SK-N-SH (cell line): ENCODE measurements at regions of chr10 and their contacts with region 1.

Region 1: DNA sequence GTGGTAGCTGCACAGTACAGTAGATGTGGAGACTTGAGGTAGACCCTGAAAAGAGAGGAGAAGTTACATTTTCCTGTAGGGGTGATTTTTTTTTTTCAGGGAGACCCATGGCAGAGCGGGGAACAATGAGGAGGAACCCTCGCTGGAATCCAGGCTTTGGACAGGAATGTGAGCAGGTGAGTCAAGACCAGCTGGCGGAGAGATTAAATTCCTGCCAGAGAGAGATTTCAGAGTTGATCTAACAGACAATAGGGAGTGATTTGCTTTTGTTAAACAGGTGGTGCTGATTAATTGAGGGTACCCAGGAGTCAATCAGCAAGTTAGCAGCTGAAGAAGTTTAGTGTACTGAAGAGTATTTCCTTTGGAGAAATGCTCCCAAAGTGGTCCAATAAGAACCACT is 41.6 kb upstream of the MINDY3 start:
- DNase-seq: no peak
- H3K4me3 ChIP-seq: no peak overlapping the region
- H3K27ac ChIP-seq: no peak overlapping the region
- H3K4me1 ChIP-seq: no peaks in the 10 kb centered on the region
- H3K27me3 ChIP-seq: no peaks in the 10 kb centered on the region
- CTCF ChIP-seq: no peak
- EP300 ChIP-seq: no peak
- RAD21 ChIP-seq: no peak

Region 2: DNA sequence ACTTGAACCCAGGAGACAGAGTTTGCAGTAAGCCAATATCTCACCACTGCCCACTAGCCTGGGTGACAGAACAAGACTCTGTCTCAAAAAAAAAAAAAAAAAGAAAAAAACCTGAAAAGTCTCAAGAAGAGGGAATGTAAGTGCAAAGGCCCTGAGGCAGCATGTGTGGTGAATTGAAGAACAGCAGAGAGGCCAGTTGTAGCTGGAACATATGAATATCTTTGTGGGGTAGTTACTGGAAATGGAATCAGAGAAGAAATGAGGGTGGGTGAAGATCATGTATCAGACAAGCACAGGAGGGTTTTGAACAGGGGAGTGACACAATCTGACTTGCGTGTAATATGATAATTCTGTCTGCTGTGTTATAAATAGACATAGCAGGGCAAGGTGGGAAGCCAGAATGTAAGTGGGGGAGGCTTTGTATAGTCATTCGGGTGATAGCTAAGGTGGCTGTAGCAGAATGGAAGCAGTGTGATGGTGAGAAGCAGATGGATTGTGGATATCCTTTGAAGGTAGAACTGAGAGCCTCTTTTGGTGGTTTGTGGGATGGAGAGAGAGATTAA is 136.9 kb before region 1 on chr10:
- CTCF ChIA-PET with region 1: no interaction called
- POLR2A ChIA-PET with region 1: no interaction called
- DNase-seq: no peak
- H3K4me3 ChIP-seq: no peak overlapping the region
- H3K27ac ChIP-seq: no peak overlapping the region
- H3K4me1 ChIP-seq: no peaks in the 10 kb centered on the region
- H3K27me3 ChIP-seq: no peaks in the 10 kb centered on the region
- CTCF ChIP-seq: no peak
- EP300 ChIP-seq: no peak
- RAD21 ChIP-seq: no peak

Region 3: DNA sequence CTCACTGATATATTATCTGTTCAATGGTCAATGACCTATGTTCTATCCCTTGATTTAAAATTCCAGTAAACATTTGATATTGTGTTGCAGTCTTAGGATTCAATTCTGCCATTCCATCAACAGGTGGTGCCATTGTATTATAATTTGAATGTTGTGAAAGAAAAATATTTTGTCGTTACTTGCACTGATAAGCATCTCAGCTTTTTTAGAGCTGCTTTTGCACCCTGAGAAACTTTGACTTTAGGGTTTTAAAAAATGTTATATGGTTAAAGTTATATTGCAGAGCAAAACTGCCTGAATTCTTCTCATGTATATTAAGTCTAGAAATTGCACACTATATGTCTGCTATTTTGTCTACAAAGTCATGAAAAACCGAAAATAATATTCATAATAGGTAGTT is 22.8 kb before region 1 on chr10:
- CTCF ChIA-PET with region 1: interaction called, 16 read pairs
- POLR2A ChIA-PET with region 1: no interaction called
- DNase-seq: peak; percentile 44
- H3K4me3 ChIP-seq: no peak overlapping the region
- H3K27ac ChIP-seq: no peak overlapping the region
- H3K4me1 ChIP-seq: no peaks in the 10 kb centered on the region
- H3K27me3 ChIP-seq: peaks cover 14% of the 10 kb centered on the region; the same call in 1 of the 2 replicates
- CTCF ChIP-seq: peak; percentile 87
- EP300 ChIP-seq: no peak
- RAD21 ChIP-seq: peak; percentile 77

Region 4: DNA sequence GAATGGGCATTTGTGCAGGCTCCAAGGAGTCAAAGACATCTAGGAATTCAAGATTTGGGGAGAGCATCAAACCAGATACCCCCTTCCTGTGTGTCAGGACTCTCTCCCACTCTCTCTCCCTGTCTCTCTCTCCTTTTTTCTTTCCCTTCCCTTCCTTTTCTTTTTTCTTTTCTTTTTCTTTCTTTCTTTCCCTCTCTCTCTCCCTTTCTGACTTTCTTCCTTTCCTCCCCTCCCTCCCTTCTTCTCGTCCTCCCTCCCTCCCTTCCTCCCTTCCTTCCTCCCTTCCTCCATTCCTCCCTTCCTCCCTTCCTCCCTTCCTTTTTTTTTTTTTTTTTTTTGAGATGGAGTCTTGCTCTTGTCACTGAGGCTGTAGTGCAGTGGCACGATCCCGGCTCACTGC is 17.4 kb before region 1 on chr10:
- CTCF ChIA-PET with region 1: interaction called, 16 read pairs
- POLR2A ChIA-PET with region 1: no interaction called
- DNase-seq: no peak
- H3K4me3 ChIP-seq: no peak overlapping the region
- H3K27ac ChIP-seq: no peak overlapping the region
- H3K4me1 ChIP-seq: no peaks in the 10 kb centered on the region
- H3K27me3 ChIP-seq: peaks cover 20% of the 10 kb centered on the region; the same call in 1 of the 2 replicates
- CTCF ChIP-seq: no peak
- EP300 ChIP-seq: no peak
- RAD21 ChIP-seq: no peak

Region 5: GRCh38 chr10:16063350-16063749 is 161.5 kb after region 1 on chr10:
- CTCF ChIA-PET with region 1: no interaction called
- POLR2A ChIA-PET with region 1: no interaction called
- DNase-seq: no peak
- H3K4me3 ChIP-seq: no peak overlapping the region
- H3K27ac ChIP-seq: no peak overlapping the region
- H3K4me1 ChIP-seq: no peaks in the 10 kb centered on the region
- H3K27me3 ChIP-seq: no peaks in the 10 kb centered on the region
- CTCF ChIP-seq: no peak
- EP300 ChIP-seq: no peak
- RAD21 ChIP-seq: no peak

Region 6: DNA sequence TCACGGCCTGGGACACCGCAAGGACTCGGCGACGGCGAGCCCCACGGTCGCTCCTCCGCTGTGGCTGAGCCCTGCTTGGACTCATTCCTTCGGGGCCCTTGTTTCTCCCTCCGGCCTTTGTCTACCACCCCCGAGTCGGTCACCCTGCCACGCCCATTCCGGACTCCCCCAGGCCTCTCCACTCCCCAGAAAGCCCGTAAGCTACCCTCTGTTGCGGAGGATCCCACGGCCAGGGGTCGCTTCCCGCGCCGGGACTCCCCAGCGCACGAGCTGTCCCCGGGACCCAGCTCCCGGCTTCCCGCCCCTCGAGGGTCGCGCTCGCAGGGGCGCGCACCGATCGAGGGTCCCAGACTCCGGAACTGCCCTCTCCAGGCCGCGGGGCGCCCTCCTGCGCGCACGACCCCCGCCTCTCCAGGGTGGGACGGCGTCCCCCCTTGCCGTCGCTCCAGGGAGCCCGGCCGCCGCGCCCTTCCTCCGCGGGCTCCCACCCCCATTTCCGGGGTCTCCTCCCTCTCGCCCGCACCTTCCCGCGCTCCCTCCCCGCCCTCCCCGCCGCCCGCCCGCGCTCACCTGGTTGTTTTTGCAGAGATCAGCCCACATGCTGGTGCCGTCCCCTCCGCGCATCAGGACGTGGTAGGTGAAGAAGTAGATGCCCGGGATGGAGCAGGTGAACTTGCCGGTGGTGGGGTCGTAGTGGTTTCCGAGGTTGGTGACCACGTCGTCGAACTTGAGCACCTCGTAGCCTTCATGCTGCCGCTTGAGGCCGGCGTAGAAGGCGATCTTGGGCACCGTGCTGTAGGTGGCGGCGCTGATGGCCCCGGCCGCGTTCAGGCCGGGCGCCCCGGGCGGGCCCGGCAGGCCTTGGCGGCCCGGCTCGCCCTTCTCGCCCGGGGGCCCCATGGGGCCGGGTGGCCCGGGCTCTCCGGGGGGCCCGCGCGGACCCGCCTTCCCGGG is 618.3 kb after region 1 on chr10:
- CTCF ChIA-PET with region 1: interaction called, 13 read pairs
- POLR2A ChIA-PET with region 1: no interaction called
- DNase-seq: peak; percentile 54
- H3K4me3 ChIP-seq: peak overlapping the region in 1 of 2 experiments; percentile 41; a peak in 1 of 4 replicates
- H3K27ac ChIP-seq: no peak overlapping the region
- H3K4me1 ChIP-seq: peaks cover 0 to 3% of the 10 kb centered on the region in 2 experiments; a peak in 1 of 4 replicates
- H3K27me3 ChIP-seq: peaks cover 19% of the 10 kb centered on the region
- CTCF ChIP-seq: no peak
- EP300 ChIP-seq: no peak
- RAD21 ChIP-seq: no peak

Region 7: GRCh38 chr10:16545116-16545736 is 643.3 kb after region 1 on chr10:
- CTCF ChIA-PET with region 1: interaction called, 18 read pairs
- POLR2A ChIA-PET with region 1: no interaction called
- DNase-seq: peak; percentile 50
- H3K4me3 ChIP-seq: peak overlapping the region in 1 of 2 experiments; percentile 38; a peak in 1 of 4 replicates
- H3K27ac ChIP-seq: peak overlapping the region in 1 of 2 experiments; percentile 45; a peak in 1 of 4 replicates
- H3K4me1 ChIP-seq: peaks cover 0 to 2% of the 10 kb centered on the region in 2 experiments; a peak in 1 of 4 replicates
- H3K27me3 ChIP-seq: no peaks in the 10 kb centered on the region
- CTCF ChIP-seq: peak; percentile 57
- EP300 ChIP-seq: peak in 1 of 2 experiments; percentile 62; a peak in 1 of 4 replicates
- RAD21 ChIP-seq: peak; percentile 58

Region 8: DNA sequence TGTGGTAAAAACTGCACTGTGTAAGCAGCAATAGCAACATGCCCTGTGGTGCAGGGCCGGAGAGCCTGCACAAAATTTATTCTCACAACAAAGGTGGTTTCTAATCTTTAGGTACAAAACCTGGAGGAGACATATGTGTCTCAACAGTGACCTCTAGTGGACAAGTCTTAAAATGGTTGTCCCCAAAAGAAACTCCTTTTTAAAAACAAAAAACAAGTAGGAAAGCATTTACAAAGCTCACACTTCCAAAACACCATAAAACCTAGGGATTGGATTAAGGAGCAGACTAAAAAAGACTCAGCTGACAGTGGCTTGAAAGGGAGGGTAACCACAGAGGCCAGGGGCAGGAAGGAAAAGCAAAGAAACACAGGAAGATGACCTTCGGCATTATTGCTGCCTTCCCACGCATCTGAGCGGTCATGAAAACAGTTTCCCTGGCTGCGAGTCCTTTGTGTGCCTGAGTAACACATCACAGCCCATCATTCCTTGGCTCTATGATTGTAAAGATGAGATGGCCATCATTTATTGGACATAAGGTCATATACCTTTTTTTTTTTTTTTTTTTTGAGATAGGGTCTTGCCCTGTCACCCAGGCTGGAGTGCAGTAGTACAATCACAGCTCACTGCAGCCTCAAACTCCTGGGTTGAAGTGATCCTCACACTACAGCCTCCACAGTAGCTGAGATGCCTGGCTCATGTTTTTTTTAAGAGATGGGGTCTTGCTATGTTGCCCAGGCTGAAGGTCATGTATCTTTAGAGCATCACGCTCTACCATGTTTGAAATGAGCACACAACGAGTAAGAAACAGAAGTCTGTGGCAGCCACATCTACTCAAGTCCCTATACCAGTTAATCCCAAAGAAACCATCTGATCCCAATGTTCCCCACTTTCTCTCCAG is 875.8 kb after region 1 on chr10:
- CTCF ChIA-PET with region 1: interaction called, 18 read pairs
- POLR2A ChIA-PET with region 1: no interaction called
- DNase-seq: peak; percentile 65
- H3K4me3 ChIP-seq: no peak overlapping the region
- H3K27ac ChIP-seq: no peak overlapping the region
- H3K4me1 ChIP-seq: peaks cover 0 to 4% of the 10 kb centered on the region in 2 experiments; a peak in 1 of 4 replicates
- H3K27me3 ChIP-seq: no peaks in the 10 kb centered on the region
- CTCF ChIP-seq: peak; percentile 86
- EP300 ChIP-seq: no peak
- RAD21 ChIP-seq: peak; percentile 86